ENCODE measurements at regions of chr21 and their contacts with region 1.

Region 1: DNA sequence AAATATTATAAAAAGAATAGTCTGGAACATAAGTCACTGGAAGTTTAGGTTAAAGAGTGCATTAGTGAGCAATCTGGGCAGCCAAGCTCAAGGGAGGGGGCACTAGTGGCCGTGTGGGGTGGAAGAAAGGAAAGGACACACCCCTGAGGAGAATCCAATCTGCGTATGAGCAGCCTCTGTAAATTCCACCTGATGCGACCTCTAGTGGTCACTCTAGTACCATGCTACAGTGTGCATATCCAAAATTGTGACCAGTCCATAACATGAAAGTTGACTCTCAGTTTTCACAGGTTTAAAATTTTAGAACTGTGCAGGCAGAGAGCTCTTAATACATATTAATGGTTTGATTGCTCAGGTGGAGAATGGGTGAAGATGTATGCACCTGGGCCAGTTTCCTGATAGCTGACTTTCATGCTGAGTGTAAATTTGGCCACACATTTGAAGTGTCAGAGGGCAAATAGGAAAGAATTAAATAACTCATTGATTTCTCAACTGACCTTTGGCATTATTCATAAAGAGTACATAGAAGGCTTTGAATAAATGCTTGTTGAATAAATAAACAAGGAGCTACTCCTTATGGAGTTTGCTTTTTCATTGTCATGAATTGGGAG is 105.9 kb upstream of the C21orf91 start:
- DNase-seq: no peak
- ATAC-seq: peak; percentile 61 to 86 (median 83)
- H3K4me3 ChIP-seq: no peak overlapping the region
- H3K27ac ChIP-seq: no peak overlapping the region
- H3K4me1 ChIP-seq: no peaks in the 10 kb centered on the region
- H3K27me3 ChIP-seq: no peaks in the 10 kb centered on the region
- CTCF ChIP-seq: peak; percentile 76

Region 2: DNA sequence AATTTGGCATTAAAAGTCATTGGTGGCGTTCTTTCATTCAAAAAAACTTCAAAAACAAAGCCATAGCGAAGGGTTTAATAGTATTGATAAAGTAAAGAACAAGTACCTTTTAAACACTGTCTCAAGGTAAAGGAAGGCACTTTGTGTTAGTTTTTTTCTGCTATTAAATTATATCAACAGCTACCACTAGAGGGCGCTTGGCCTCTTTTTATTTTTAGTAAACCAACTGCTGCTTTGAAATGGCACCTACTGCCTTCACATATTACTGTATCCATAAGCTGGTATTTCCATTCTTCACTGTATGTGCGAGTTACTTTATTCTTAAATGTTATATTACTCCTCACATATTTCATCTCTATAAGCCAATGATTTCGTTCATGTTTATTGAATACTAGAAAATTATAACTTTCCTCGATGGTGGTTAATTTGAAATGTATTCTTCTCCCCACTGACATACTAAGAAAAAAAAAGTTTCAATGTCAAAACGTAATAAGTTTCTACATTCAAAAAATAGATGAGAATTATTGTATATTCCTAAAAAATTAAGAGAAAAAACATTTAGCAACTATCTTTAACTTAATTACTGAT is 538.0 kb before region 1 on chr21:
- intact Hi-C with region 1: loop called in 1 of 2 experiments (anchors 10 kb)
- DNase-seq: no peak
- ATAC-seq: peak in 1 of 4 donors; percentile 45
- H3K4me3 ChIP-seq: no peak overlapping the region
- H3K27ac ChIP-seq: no peak overlapping the region
- H3K4me1 ChIP-seq: no peaks in the 10 kb centered on the region
- H3K27me3 ChIP-seq: no peaks in the 10 kb centered on the region
- CTCF ChIP-seq: peak; percentile 86

Region 3: GRCh38 chr21:17679002-17679600 is 246.0 kb before region 1 on chr21:
- intact Hi-C with region 1: loop called (anchors 2 to 5 kb)
- DNase-seq: no peak
- ATAC-seq: peak; percentile 53 to 82 (median 67)
- H3K4me3 ChIP-seq: no peak overlapping the region
- H3K27ac ChIP-seq: no peak overlapping the region
- H3K4me1 ChIP-seq: no peaks in the 10 kb centered on the region
- H3K27me3 ChIP-seq: no peaks in the 10 kb centered on the region
- CTCF ChIP-seq: peak; percentile 74